CD8-positive, alpha-beta T cell (primary cell): ENCODE measurements at regions of chr11 and their contacts with region 1.

Region 1: DNA sequence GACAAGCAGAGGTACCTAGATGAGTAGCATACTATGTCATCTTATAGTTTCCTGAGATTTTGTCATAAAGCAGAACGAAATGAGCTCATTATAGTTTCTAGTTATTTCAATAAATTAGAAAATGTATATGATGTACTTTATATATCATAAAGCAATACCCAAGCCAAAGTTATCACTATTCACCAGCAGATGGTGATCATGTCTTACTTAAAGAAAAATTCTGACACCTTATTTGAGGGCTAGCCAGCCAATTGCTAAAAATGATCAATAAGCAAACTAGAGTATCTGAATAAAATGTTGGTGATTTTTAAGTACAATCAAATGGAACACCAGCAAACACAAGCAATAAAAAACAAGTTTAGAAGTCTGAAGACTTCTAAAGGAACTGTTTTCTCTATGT is 44.1 kb downstream of the RSF1 start:
- DNase-seq: peak in 2 of 9 experiments; percentile 36 to 51
- ATAC-seq: peak; percentile 31
- H3K4me3 ChIP-seq: no peak overlapping the region
- H3K4me3 Mint-ChIP-seq: no peak overlapping the region
- H3K27ac ChIP-seq: no peak overlapping the region
- H3K27ac Mint-ChIP-seq: no peak overlapping the region
- H3K4me1 ChIP-seq: peaks cover 9% of the 10 kb centered on the region
- H3K4me1 Mint-ChIP-seq: peaks cover 62% of the 10 kb centered on the region
- H3K27me3 ChIP-seq: no peaks in the 10 kb centered on the region
- H3K27me3 Mint-ChIP-seq: no peaks in the 10 kb centered on the region
- CTCF ChIP-seq: peak; percentile 59

Region 2: DNA sequence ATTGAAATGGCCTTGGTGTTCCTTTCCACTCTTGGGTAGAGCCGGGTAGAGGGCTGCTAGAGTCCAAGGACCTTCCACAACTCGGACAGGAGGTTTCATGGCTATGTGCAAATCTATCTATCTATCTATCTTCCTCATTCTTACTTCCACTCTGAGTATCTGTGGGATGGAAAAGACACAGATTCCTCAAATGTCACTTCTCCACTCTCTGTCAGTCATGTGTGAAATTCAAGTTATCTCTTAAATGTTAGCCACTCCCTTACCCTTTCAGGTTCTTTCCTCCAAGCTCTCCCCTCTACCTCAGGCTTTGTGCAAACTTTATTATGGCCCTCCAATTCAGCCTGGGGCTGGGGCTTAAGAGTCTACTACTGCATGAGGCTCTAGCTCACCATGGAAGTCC is 559.3 kb before region 1 on chr11:
- CTCF ChIA-PET with region 1: no interaction called
- POLR2A ChIA-PET with region 1: no interaction called
- intact Hi-C with region 1: no loop called
- DNase-seq: no peak
- ATAC-seq: no peak
- H3K4me3 ChIP-seq: no peak overlapping the region
- H3K4me3 Mint-ChIP-seq: no peak overlapping the region
- H3K27ac ChIP-seq: no peak overlapping the region
- H3K27ac Mint-ChIP-seq: no peak overlapping the region
- H3K4me1 ChIP-seq: no peaks in the 10 kb centered on the region
- H3K4me1 Mint-ChIP-seq: no peaks in the 10 kb centered on the region
- H3K27me3 ChIP-seq: no peaks in the 10 kb centered on the region
- H3K27me3 Mint-ChIP-seq: no peaks in the 10 kb centered on the region
- CTCF ChIP-seq: no peak

Region 3: GRCh38 chr11:77799338-77799737 is 22.9 kb after region 1 on chr11:
- CTCF ChIA-PET with region 1: no interaction called
- POLR2A ChIA-PET with region 1: no interaction called
- intact Hi-C with region 1: no loop called
- DNase-seq: no peak
- ATAC-seq: no peak
- H3K4me3 ChIP-seq: no peak overlapping the region
- H3K4me3 Mint-ChIP-seq: no peak overlapping the region
- H3K27ac ChIP-seq: no peak overlapping the region
- H3K27ac Mint-ChIP-seq: peak overlapping the region; percentile 41
- H3K4me1 ChIP-seq: peaks cover 17% of the 10 kb centered on the region
- H3K4me1 Mint-ChIP-seq: peaks cover 81% of the 10 kb centered on the region
- H3K27me3 ChIP-seq: no peaks in the 10 kb centered on the region
- H3K27me3 Mint-ChIP-seq: no peaks in the 10 kb centered on the region
- CTCF ChIP-seq: no peak

Region 4: GRCh38 chr11:78000193-78000592 is 223.7 kb after region 1 on chr11:
- CTCF ChIA-PET with region 1: interaction called, 4 read pairs
- POLR2A ChIA-PET with region 1: no interaction called
- intact Hi-C with region 1: loop called (anchors 1 to 2 kb)
- DNase-seq: peak in 8 of 9 experiments; percentile 7 to 72 (median 43)
- ATAC-seq: peak; percentile 89
- H3K4me3 ChIP-seq: no peak overlapping the region
- H3K4me3 Mint-ChIP-seq: no peak overlapping the region
- H3K27ac ChIP-seq: no peak overlapping the region
- H3K27ac Mint-ChIP-seq: no peak overlapping the region
- H3K4me1 ChIP-seq: peaks cover 8% of the 10 kb centered on the region
- H3K4me1 Mint-ChIP-seq: peaks cover 3% of the 10 kb centered on the region
- H3K27me3 ChIP-seq: no peaks in the 10 kb centered on the region
- H3K27me3 Mint-ChIP-seq: peaks cover 3% of the 10 kb centered on the region
- CTCF ChIP-seq: peak; percentile 56

Region 5: GRCh38 chr11:78045851-78046485 is 269.5 kb after region 1 on chr11:
- CTCF ChIA-PET with region 1: no interaction called
- POLR2A ChIA-PET with region 1: no interaction called
- intact Hi-C with region 1: loop called (anchors 1 to 5 kb)
- DNase-seq: peak; percentile 58 to 90 (median 78)
- ATAC-seq: peak; percentile 95
- H3K4me3 ChIP-seq: peak overlapping the region; percentile 15 to 48
- H3K4me3 Mint-ChIP-seq: peak overlapping the region; percentile 63
- H3K27ac ChIP-seq: no peak overlapping the region
- H3K27ac Mint-ChIP-seq: no peak overlapping the region
- H3K4me1 ChIP-seq: peaks cover 5% of the 10 kb centered on the region
- H3K4me1 Mint-ChIP-seq: peaks cover 13% of the 10 kb centered on the region
- H3K27me3 ChIP-seq: no peaks in the 10 kb centered on the region
- H3K27me3 Mint-ChIP-seq: no peaks in the 10 kb centered on the region
- CTCF ChIP-seq: peak; percentile 97